ENCODE measurements at regions of chr5 and their contacts with region 1.

Region 1: DNA sequence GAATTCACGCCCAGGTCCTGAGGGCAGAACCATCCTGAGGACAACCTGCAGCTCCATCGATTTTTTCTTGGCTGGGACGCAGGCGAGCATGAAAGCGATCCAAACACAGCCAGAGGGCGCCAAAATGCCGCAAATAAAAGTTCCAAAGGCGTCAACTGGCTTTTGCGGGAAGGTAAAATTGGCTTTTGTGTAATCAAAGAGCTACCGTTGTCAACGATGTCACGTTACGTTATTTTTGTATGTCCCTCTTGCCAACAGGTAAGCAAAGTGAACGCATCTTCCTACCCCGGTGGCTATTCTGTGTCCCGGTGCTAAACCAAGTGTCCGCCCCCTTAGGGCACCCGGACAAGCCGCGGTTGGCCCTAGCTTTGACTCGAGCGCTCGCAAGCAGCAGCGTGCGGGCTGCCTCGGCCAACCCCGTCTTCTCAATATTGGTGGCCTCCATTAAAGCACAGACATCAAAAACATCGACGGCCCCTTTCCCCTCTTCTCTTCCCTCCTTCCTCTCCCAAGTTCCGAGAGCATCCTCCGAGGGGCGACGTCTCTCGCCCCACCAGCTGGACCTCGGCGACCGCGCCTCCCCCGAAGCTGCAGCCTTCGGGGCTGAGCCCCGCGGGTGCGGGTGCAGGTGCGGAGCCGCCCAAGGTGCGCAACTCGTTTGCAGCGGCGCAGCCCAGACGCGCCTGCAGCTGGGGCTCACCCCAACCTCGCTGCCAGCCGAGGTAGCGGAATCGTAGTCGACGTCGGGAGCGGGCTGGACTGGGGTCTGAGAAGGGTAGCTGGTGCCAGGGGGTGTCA is 1.1 kb upstream of the BASP1 start:
- DNase-seq: peak; percentile 91
- H3K4me3 ChIP-seq: peak overlapping the region; percentile 96
- H3K27ac ChIP-seq: peak overlapping the region; percentile 67
- H3K4me1 ChIP-seq: peaks cover 58% of the 10 kb centered on the region
- CTCF ChIP-seq: peak; percentile 91

Region 2: GRCh38 chr5:17258431-17258830 is 42.1 kb after region 1 on chr5:
- CTCF ChIA-PET with region 1: no interaction called
- POLR2A ChIA-PET with region 1: no interaction called
- intact Hi-C with region 1: no loop called
- DNase-seq: no peak
- H3K4me3 ChIP-seq: no peak overlapping the region
- H3K27ac ChIP-seq: no peak overlapping the region
- H3K4me1 ChIP-seq: peaks cover 49% of the 10 kb centered on the region
- CTCF ChIP-seq: no peak

Region 3: DNA sequence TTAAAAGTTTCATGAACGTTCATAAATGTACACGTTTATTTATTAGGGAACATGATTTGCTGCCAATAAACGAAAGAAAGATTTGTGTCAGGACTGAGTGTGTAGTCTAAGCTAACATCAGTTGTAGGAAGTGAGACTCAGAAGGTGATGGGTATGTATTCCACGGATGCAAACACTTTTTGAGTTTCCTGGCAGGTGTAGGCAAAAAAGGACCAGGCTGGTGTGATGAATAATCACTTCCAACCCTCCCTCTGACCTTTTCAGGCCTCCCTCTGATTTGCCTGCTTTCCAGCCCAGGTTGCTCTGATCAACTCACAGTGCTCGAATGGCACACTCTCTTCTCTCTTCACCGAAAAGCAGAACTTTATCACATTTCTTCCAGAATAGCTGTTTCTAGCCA is 52.8 kb after region 1 on chr5:
- CTCF ChIA-PET with region 1: interaction called, 3 read pairs
- POLR2A ChIA-PET with region 1: interaction called, 4 read pairs
- intact Hi-C with region 1: loop called (anchors 5 kb)
- DNase-seq: peak; percentile 72
- H3K4me3 ChIP-seq: peak overlapping the region; percentile 45
- H3K27ac ChIP-seq: peak overlapping the region; percentile 74
- H3K4me1 ChIP-seq: peaks cover 86% of the 10 kb centered on the region
- CTCF ChIP-seq: no peak

Region 4: DNA sequence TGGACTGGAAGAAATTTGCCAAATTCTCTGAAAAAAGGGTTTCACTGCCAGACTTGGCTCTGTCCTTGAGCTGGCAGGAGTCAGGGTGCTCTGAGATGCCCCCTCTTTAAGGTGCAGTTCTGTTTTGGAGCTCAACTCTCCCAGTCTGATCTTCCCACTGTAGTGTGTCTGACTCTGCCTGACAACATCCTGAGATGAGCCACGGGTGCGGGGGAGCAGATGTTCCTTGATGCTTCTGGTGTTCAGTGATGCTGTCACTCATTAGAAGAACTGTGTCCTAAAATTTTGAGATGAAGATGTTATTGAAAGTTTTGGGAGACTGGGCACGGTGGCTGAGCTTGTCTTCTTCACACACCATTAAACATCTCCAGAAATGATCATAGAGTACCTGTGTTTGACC is 79.3 kb after region 1 on chr5:
- CTCF ChIA-PET with region 1: no interaction called
- POLR2A ChIA-PET with region 1: no interaction called
- intact Hi-C with region 1: no loop called
- DNase-seq: no peak
- H3K4me3 ChIP-seq: no peak overlapping the region
- H3K27ac ChIP-seq: no peak overlapping the region
- H3K4me1 ChIP-seq: no peaks in the 10 kb centered on the region
- CTCF ChIP-seq: no peak

Region 5: DNA sequence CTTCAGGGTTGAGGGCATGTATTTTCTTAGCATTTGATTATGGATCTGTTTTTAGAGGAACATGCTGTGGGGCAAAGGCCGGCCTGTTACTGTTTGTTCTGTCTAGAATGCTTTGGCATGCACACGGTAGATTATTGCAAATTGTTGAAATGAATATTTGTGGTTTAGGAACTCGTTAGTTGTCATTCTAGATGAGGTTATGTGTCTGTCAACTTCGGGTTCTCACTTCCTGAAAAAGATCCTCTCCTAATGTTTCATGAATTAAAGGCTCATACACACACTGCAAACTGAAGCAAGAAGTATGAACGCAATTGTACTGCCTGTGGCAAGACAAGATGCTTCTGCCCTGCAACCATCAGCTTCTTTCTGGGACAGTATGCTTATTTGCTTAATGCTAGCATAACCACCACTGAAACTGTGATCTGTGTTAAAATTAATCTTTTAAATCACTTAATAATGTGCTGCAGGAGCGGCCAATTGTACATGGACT is 100.6 kb after region 1 on chr5:
- CTCF ChIA-PET with region 1: no interaction called
- POLR2A ChIA-PET with region 1: interaction called, 7 read pairs
- intact Hi-C with region 1: loop called (anchors 1 kb)
- DNase-seq: peak; percentile 76
- H3K4me3 ChIP-seq: peak overlapping the region; percentile 67
- H3K27ac ChIP-seq: peak overlapping the region; percentile 98
- H3K4me1 ChIP-seq: peaks cover 66% of the 10 kb centered on the region
- CTCF ChIP-seq: no peak

Region 6: DNA sequence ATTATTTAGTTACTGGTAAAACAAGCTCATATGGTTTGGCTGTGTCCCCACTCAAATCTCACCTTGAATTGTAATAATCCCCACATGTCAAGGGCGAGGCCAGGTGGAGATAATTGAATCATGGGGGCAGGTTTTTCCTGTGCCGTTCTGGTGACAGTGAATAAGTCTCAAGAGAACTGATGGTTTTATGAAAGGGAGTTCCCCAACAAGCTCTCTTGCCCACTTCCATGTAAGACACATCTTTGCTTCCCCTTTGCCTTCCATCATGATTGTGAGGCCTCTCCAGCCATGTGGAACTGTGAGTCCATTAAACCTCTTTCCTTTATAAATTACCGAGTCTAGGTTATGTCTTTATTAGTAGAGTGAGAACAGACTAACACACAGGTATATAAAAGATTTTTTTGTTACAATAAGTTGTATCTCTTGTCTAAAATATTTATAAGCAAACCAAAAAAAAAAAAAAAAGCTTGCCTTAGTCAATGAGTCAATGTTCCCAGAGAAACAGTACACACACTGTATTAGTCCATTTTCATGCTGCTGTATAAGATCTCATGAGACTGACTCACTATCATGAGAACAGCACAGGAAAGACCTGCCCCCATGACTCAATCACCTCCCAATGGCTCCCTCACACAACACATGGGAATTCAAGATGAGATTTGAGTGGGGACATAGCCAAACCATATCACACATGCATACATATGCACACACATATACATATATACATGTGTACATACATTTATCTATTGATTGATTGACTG is 139.4 kb after region 1 on chr5:
- CTCF ChIA-PET with region 1: no interaction called
- POLR2A ChIA-PET with region 1: no interaction called
- intact Hi-C with region 1: no loop called
- DNase-seq: no peak
- H3K4me3 ChIP-seq: no peak overlapping the region
- H3K27ac ChIP-seq: no peak overlapping the region
- H3K4me1 ChIP-seq: peaks cover 10% of the 10 kb centered on the region
- CTCF ChIP-seq: no peak

Region 7: DNA sequence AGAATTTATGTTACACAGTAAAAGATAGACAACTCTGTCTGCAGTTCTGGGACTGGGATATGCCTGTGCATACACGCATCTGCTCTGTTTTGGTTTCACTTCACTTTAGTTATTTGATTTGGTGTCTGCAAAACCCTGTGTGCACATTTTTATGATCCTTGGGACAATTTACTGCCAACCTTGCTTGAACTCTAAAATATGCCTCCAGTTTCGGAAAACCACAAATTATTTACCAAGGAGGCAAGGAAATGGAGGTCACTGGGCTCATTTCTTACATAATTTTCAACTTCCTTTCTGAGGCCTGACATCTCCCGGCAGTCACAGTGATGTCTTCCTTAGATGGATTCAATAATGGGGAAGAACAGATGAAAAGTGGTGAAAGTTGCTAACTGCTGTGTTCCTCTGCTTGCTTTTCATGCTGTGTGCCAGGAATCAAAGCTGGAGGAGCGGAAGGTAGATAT is 220.4 kb after region 1 on chr5:
- CTCF ChIA-PET with region 1: interaction called, 4 read pairs
- POLR2A ChIA-PET with region 1: no interaction called
- intact Hi-C with region 1: loop called (anchors 10 kb)
- DNase-seq: peak; percentile 44
- H3K4me3 ChIP-seq: peak overlapping the region; percentile 42
- H3K27ac ChIP-seq: no peak overlapping the region
- H3K4me1 ChIP-seq: peaks cover 25% of the 10 kb centered on the region
- CTCF ChIP-seq: no peak

Region 8: GRCh38 chr5:18305297-18305924 is 1089.0 kb after region 1 on chr5:
- CTCF ChIA-PET with region 1: interaction called, 3 read pairs
- POLR2A ChIA-PET with region 1: no interaction called
- intact Hi-C with region 1: loop called (anchors 1 kb)
- DNase-seq: peak; percentile 30
- H3K4me3 ChIP-seq: no peak overlapping the region
- H3K27ac ChIP-seq: no peak overlapping the region
- H3K4me1 ChIP-seq: no peaks in the 10 kb centered on the region
- CTCF ChIP-seq: peak; percentile 82

Measured in OCI-LY7 (cell line).